Activated T-helper 2 cell treated with anti-CD3 and anti-CD28 coated beads, Interferon-gamma antibody, Interleukin-2, Interleukin-4, amounts not matched to agents 10 μg/mL and 5 μg/mL and 100 μg/mL, durations not matched to agents 14 hours and 24 hours and 36 hours (primary cell): ENCODE measurements at regions of chr10 and their contacts with region 1.

Region 1: DNA sequence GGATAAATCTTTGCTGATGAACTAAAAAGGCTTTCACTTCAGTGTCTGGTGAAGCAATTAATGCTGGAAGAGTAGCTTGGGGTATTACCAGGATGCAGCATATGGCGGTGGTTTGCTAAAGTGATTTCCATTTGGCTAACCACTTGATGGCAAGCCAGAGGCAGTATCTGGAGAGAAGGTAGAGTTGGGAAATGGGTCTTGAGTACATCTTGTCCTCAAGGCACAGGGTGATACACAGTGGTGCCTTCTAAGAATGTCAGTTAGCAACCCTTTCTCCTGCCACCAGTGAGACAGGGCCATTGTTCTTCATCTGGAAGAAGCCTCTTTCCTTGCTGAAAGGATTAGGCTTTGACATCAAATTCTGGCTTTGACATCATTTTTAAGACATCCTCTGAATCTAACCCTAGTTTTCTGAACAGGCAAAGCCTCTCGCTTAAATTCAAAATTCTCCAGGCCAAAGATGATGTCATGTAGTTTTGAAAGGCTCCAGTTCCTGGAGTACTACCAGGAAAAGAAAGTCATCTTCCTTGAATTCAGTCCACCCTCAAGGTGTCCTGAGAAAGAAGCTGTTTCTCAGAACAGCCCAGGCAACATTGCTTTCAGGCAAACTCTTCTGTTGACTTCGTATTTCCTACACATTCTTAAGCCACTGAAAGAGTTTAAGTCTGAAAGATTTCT is 162.4 kb downstream of the ARID5B start:
- DNase-seq: no peak
- H3K4me3 Mint-ChIP-seq: peak overlapping the region; percentile 39
- H3K27ac Mint-ChIP-seq: peak overlapping the region; percentile 87
- H3K4me1 Mint-ChIP-seq: peaks cover 72% of the 10 kb centered on the region
- H3K27me3 Mint-ChIP-seq: no peaks in the 10 kb centered on the region

Region 2: DNA sequence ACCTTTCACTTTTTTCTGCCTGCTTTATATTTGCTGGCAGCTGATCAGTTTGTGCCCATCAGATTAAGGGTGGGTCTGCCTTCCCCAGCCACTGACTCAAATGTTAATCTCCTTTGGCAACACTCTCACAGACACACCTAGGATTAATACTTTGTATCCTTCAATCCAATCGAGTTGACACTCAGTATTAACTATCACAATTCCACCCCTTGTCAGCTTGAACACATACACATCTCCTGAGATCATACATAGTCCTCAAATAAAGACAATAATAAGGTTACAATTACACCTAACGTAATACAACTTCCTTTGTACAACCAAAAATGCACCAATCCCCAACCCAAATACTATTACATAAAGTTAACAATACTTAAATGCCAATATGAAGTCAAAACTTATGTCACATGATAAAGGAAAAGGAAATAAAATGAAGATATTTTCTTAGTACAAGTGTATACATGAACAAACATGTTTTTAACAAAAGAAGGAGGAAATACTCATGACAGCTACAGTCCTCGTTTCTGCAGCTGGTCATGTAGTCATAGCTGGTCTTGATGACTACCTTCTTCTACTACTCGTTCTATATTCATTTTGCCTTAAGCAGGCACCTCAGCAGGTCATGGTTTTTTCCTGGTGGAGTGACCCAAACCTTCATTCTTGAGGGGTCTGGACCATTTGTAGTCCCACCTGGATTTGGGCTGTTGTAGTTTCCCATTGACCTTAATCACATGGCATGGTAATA is 497.9 kb before region 1 on chr10:
- intact Hi-C with region 1: no loop called
- DNase-seq: no peak
- H3K4me3 Mint-ChIP-seq: no peak overlapping the region
- H3K27ac Mint-ChIP-seq: no peak overlapping the region
- H3K4me1 Mint-ChIP-seq: no peaks in the 10 kb centered on the region
- H3K27me3 Mint-ChIP-seq: no peaks in the 10 kb centered on the region

Region 3: GRCh38 chr10:61896854-61897661 is 166.9 kb before region 1 on chr10:
- intact Hi-C with region 1: loop called (anchors 1 kb)
- DNase-seq: peak; percentile 56
- H3K4me3 Mint-ChIP-seq: peak overlapping the region; percentile 73
- H3K27ac Mint-ChIP-seq: peak overlapping the region; percentile 83
- H3K4me1 Mint-ChIP-seq: peaks cover 42% of the 10 kb centered on the region
- H3K27me3 Mint-ChIP-seq: no peaks in the 10 kb centered on the region

Region 4: GRCh38 chr10:62082729-62083411 is 18.9 kb after region 1 on chr10:
- intact Hi-C with region 1: loop called (anchors 2 kb)
- DNase-seq: peak; percentile 44
- H3K4me3 Mint-ChIP-seq: peak overlapping the region; percentile 61
- H3K27ac Mint-ChIP-seq: peak overlapping the region; percentile 87
- H3K4me1 Mint-ChIP-seq: peaks cover 62% of the 10 kb centered on the region
- H3K27me3 Mint-ChIP-seq: no peaks in the 10 kb centered on the region

Region 5: GRCh38 chr10:62121187-62121530 is 57.2 kb after region 1 on chr10:
- intact Hi-C with region 1: loop called (anchors 1 kb)
- DNase-seq: no peak
- H3K4me3 Mint-ChIP-seq: no peak overlapping the region
- H3K27ac Mint-ChIP-seq: peak overlapping the region; percentile 66
- H3K4me1 Mint-ChIP-seq: peaks cover 27% of the 10 kb centered on the region
- H3K27me3 Mint-ChIP-seq: no peaks in the 10 kb centered on the region

Region 6: GRCh38 chr10:62224606-62225005 is 160.7 kb after region 1 on chr10:
- intact Hi-C with region 1: loop called (anchors 5 kb)
- DNase-seq: no peak
- H3K4me3 Mint-ChIP-seq: no peak overlapping the region
- H3K27ac Mint-ChIP-seq: no peak overlapping the region
- H3K4me1 Mint-ChIP-seq: peaks cover 9% of the 10 kb centered on the region
- H3K27me3 Mint-ChIP-seq: no peaks in the 10 kb centered on the region